ENCODE measurements at regions of chr20 and their contacts with region 1.

Region 1: DNA sequence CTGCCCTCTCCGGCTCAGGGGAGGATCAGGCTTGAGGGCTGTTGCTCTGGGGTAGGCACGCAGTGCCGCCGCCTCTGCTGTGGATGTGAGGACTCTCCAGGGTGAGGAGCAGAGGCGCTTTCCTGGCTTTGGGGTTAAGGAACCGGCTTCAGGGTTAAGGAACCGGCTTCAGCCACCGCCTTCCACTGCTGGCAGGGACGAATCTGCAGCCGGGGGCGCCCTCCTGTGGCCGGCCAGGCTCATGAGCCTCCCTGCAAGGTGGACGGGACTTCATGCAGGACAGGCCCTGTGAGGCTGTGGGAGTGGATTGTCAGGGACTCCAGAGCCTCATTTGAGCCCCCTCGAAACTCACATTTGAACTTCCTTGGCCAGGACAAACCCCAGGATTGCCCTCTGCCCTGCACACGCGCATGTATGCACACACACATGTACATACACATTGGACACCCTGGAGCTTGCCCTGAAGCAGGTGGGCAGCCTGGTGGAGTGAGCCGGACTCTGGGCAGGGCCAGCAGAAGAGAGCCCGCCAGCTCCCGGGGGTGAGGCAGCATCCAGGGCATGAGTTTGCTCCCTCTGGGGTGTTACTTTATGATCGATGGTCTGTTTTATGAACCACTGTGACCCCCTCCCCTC is 146.8 kb downstream of the PHACTR3 start:
- DNase-seq: peak; percentile 85
- ATAC-seq: peak; percentile 58

Region 2: GRCh38 chr20:59571551-59572314 is 179.4 kb before region 1 on chr20:
- intact Hi-C with region 1: loop called (anchors 2 kb)
- DNase-seq: no peak
- ATAC-seq: peak; percentile 78

Region 3: DNA sequence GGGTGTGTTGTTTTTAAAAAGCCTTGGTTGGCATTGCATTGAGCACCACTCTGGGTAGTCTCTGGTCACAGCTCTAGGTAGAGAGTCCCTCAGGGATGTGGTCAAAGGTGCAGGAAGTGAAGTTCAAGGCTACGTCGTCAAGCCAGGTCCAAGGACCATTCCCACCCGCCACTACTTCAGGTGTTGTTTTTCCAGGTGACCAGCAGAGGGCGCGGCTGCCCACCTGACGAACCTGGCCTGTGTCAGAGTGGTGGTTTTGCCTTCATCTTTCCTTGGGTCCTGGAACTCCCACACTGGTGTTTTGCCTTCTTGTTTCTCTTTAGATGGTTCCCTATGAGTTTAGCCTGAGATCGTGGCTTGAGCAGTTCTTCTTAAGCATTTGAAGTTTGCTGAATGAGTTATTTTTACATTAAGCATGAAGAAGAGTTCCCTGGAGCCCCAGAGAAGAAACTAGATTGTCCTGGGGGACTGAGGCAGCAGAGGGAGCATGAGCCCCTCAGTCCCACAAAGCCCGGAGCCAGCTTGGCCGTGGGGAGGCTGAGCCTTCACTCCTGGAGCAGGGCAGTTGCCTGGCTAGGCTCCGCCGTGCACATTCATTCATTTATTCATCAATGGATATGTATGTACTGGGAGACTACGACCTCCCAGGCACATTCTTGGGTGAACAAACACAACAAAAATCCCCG is 152.4 kb before region 1 on chr20:
- intact Hi-C with region 1: loop called (anchors 1 kb)
- DNase-seq: no peak
- ATAC-seq: peak; percentile 47

Region 4: GRCh38 chr20:59692173-59692572 is 59.0 kb before region 1 on chr20:
- intact Hi-C with region 1: loop called (anchors 5 kb)
- DNase-seq: no peak
- ATAC-seq: peak; percentile 84